ENCODE measurements at regions of chr11 and their contacts with region 1.

Region 1: GRCh38 chr11:128956401-128957201 is 13.9 kb upstream of the TP53AIP1 start:
- DNase-seq: peak; percentile 65
- H3K4me3 ChIP-seq: no peak overlapping the region
- H3K27ac ChIP-seq: no peak overlapping the region
- H3K4me1 ChIP-seq: no peaks in the 10 kb centered on the region
- CTCF ChIP-seq: peak; percentile 89

Region 2: DNA sequence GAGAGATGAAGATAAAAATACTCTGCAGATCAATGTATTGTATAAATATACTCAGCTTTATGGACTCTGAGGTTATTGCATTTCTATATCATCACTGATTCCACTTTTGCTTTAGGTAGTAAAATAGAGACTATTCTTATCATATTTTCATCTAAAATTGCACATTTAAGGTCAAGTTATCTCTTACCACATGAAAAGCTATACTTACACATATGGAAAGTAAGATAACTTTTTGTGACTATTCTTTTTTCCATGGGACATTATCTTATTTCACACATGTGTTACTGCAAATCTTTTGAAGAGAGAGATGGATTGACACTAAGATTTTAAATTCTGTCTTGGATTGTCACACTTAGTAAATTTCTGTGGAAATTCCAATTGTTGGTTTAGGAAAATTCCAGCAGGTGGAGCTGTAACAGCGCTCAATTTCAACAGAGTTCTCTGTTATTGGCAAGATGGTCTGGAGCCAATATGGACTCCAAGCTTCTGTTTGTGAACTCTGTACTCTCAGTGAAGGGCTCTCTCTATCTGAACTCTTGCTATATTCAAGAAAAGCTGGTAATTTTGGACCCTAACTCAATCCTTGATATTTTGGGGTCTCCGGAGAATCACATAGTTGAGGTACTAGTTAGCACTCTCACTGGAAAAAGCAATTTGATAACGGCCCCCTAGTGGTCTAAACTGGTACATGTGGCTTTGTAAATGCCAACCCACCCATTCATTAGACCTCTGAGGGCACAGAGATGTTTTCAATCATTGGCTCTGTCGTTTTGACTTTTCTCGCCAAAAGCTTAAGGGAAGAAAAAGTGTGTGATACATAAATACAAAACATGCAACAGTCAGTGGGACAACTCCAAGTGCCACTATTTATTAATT is 798.9 kb before region 1 on chr11:
- CTCF ChIA-PET with region 1: no interaction called
- POLR2A ChIA-PET with region 1: no interaction called
- intact Hi-C with region 1: loop called (anchors 5 kb)
- DNase-seq: peak; percentile 80
- H3K4me3 ChIP-seq: no peak overlapping the region
- H3K27ac ChIP-seq: no peak overlapping the region
- H3K4me1 ChIP-seq: no peaks in the 10 kb centered on the region
- CTCF ChIP-seq: peak; percentile 100

Region 3: GRCh38 chr11:128172046-128172878 is 784.3 kb before region 1 on chr11:
- CTCF ChIA-PET with region 1: no interaction called
- POLR2A ChIA-PET with region 1: interaction called, 4 read pairs
- intact Hi-C with region 1: loop called (anchors 1 kb)
- DNase-seq: peak; percentile 80
- H3K4me3 ChIP-seq: no peak overlapping the region
- H3K27ac ChIP-seq: no peak overlapping the region
- H3K4me1 ChIP-seq: no peaks in the 10 kb centered on the region
- CTCF ChIP-seq: peak; percentile 95

Region 4: GRCh38 chr11:128884703-128885338 is 71.8 kb before region 1 on chr11:
- CTCF ChIA-PET with region 1: interaction called, 5 read pairs
- POLR2A ChIA-PET with region 1: no interaction called
- intact Hi-C with region 1: loop called (anchors 1 kb)
- DNase-seq: peak; percentile 67
- H3K4me3 ChIP-seq: no peak overlapping the region
- H3K27ac ChIP-seq: no peak overlapping the region
- H3K4me1 ChIP-seq: no peaks in the 10 kb centered on the region
- CTCF ChIP-seq: peak; percentile 90

Region 5: GRCh38 chr11:128985880-128986279 is 29.3 kb after region 1 on chr11:
- CTCF ChIA-PET with region 1: no interaction called
- POLR2A ChIA-PET with region 1: no interaction called
- intact Hi-C with region 1: no loop called
- DNase-seq: no peak
- H3K4me3 ChIP-seq: no peak overlapping the region
- H3K27ac ChIP-seq: no peak overlapping the region
- H3K4me1 ChIP-seq: no peaks in the 10 kb centered on the region
- CTCF ChIP-seq: no peak

Measured in OCI-LY7 (cell line).